ENCODE measurements at regions of chr15 and their contacts with region 1.

Region 1: DNA sequence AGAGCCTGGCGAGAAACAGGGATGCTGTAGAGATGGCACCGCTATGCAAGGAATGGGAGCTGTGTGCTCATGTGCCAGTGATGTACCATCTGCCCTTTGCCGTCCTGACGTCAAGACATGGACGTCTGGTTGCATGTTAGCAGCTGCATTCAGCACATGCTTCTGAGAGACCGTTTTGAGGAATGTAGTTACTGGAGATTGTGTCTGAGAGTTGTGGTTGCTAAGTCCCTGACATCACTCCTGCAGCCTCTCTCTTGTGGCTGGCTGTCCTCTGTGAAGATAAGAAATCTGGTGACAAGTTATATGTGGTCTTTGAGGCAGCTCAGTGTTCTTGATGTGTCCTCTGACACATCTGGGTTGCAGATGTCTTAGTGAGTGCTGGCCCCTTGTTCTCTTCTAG is 165.1 kb downstream of the APBA2 start:
- DNase-seq: no peak
- H3K4me3 ChIP-seq: no peak overlapping the region
- H3K27ac ChIP-seq: no peak overlapping the region
- H3K4me1 ChIP-seq: no peaks in the 10 kb centered on the region
- H3K27me3 ChIP-seq: no peaks in the 10 kb centered on the region
- CTCF ChIP-seq: no peak

Region 2: GRCh38 chr15:28994831-28995596 is 55.9 kb before region 1 on chr15:
- CTCF ChIA-PET with region 1: no interaction called
- dilution Hi-C with region 1: loop called (anchors 5 kb)
- in situ Hi-C with region 1: no loop called
- intact Hi-C with region 1: no loop called
- DNase-seq: no peak
- H3K4me3 ChIP-seq: no peak overlapping the region
- H3K27ac ChIP-seq: no peak overlapping the region
- H3K4me1 ChIP-seq: no peaks in the 10 kb centered on the region
- H3K27me3 ChIP-seq: no peaks in the 10 kb centered on the region
- CTCF ChIP-seq: no peak

Region 3: DNA sequence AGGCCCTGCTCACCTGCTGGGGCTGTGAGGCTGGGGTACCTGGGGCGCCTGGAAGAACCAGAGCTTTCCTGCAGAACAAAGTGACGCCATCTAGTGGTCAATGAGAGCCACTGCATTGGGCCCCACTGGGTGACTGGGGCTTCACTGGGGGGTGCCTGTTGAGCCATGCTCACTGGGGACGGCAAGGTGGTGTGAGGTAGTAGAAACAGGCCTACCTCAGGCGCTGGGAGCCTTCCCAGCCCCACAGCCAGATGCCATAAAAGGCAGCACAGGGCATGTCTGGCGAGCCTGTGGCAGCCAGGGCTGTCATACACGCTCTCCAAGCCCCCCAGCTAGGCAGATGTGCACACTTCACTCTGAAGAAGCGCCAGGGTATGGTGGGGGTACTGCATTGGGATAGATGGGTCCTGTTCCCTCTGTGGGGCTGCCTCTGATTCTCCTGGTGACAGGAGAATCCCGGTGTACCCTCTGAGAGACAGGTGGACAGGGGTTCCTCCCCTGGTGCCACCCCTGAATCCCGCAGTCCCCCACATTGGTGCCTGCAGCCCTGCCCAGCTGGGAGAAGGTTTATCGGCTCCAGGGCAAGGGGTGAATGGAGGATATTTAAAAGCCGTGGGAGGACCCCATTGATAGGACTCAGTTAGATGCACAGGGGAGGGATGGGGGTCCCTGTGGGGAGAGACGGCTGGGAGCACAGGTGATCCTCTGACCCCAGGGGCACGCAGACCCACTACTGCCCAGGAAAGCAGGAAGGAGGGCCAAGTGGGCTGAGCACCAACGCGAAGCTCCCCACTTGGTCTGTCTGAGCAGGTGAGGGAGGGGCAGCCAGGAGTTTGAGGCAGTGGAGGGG is 40.0 kb after region 1 on chr15:
- CTCF ChIA-PET with region 1: no interaction called
- dilution Hi-C with region 1: loop called (anchors 5 kb)
- in situ Hi-C with region 1: no loop called
- intact Hi-C with region 1: no loop called
- DNase-seq: no peak
- H3K4me3 ChIP-seq: no peak overlapping the region
- H3K27ac ChIP-seq: no peak overlapping the region
- H3K4me1 ChIP-seq: no peaks in the 10 kb centered on the region
- H3K27me3 ChIP-seq: no peaks in the 10 kb centered on the region
- CTCF ChIP-seq: no peak